Sigmoid colon (tissue), 7 donors: ENCODE measurements at regions of chr1 and their contacts with region 1.

Region 1: DNA sequence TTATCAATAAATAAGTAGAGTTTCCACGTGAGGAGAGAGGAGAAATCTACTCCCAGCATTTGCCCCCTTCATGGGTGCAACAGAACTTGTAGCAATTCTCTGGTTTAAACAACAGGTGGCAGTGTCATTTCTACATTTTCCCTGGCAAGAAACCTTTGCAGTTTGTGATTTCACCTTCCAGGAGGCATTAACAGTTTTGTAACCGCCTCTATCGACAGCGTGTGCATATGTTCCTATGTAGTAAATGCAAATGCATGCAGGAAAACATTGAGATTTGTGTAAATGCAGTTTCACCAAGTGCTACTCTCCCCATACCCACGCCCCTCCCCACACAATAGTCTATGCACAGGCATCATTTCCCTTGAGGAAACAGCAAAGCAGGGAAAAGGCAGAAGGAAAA is 494.7 kb downstream of the SMYD3 start:
- DNase-seq: no peak
- H3K4me3 ChIP-seq: no peak overlapping the region
- H3K27ac ChIP-seq: no peak overlapping the region
- H3K4me1 ChIP-seq: no peaks in the 10 kb centered on the region
- H3K27me3 ChIP-seq: no peaks in the 10 kb centered on the region
- CTCF ChIP-seq: peak; percentile 7 to 58 (median 36)
- EP300 ChIP-seq: no peak
- POLR2A ChIP-seq: no peak

Region 2: GRCh38 chr1:246117066-246117791 is 104.9 kb after region 1 on chr1:
- intact Hi-C with region 1: loop called (anchors 2 kb)
- DNase-seq: no peak
- H3K4me3 ChIP-seq: no peak overlapping the region
- H3K27ac ChIP-seq: no peak overlapping the region
- H3K4me1 ChIP-seq: peaks cover 0 to 4% (median 0%) of the 10 kb centered on the region in 4 donors
- H3K27me3 ChIP-seq: no peaks in the 10 kb centered on the region
- CTCF ChIP-seq: peak in 3 of 4 experiments; percentile 21 to 27 (median 21)
- EP300 ChIP-seq: no peak
- POLR2A ChIP-seq: no peak

Region 3: DNA sequence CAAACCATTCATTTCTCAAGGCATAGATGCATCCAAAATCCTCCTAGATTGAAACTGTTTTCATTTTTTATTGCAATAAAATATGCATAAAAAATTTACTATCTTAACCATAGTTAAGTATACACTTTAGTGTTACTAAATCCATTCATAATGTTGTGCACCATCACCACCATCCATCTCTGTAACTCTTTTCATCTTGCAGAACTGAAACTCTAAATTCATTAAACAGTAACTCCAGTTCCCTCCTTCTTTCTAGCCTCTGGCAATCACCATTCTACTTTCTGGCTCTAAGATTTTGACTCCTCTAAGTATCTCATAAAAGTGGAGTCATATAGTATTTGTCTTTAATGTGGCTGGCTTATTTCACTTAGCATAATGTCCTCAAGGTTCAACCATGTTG is 257.9 kb after region 1 on chr1:
- intact Hi-C with region 1: loop called (anchors 10 kb)
- DNase-seq: no peak
- H3K4me3 ChIP-seq: no peak overlapping the region
- H3K27ac ChIP-seq: no peak overlapping the region
- H3K4me1 ChIP-seq: no peaks in the 10 kb centered on the region
- H3K27me3 ChIP-seq: no peaks in the 10 kb centered on the region
- CTCF ChIP-seq: no peak
- EP300 ChIP-seq: no peak
- POLR2A ChIP-seq: no peak